ENCODE measurements at regions of chr2 and their contacts with region 1.

Region 1: GRCh38 chr2:238203094-238203972 is at the start of gene ILKAP:
- DNase-seq: peak; percentile 82
- H3K4me3 Mint-ChIP-seq: peak within 1 kb of the TSS; percentile 84
- H3K27ac Mint-ChIP-seq: peak within 1 kb of the TSS; percentile 89
- H3K4me1 Mint-ChIP-seq: peaks cover 29% of the 10 kb centered on the region
- H3K27me3 Mint-ChIP-seq: no peaks in the 10 kb centered on the region
- CTCF ChIP-seq: no peak
- total RNA-seq, gene ILKAP: 57.2 and 59.6 TPM in 2 replicates

Region 2: DNA sequence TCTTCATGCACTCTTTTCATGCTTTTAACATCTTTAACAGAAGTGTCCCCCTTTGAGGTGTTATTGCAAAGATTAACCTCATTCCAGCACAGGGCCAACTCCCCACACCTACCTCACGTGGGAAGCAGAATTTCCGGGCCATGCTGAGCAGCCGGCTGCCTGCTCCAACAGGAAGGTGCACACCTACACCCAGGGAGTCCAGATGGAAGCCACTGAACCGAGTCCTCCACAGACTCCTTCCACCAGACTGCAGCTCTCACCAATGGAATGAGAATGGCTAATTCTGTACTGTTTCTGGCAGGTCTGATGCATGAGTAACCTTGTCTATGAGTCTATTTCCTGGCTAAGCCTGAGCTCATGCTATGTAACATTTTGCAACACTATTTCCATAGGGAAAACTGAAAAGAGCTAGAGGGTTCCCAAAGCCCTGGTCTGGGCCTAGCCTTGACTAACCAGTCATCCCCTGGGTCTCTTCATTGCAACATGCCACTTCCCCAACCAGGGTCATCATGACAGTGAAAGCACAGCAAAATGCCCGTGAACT is 33.6 kb before region 1 on chr2:
- CTCF ChIA-PET with region 1: no interaction called
- POLR2A ChIA-PET with region 1: interaction called, 18 read pairs
- intact Hi-C with region 1: no loop called
- DNase-seq: peak; percentile 96
- H3K4me3 Mint-ChIP-seq: peak overlapping the region; percentile 41
- H3K27ac Mint-ChIP-seq: peak overlapping the region; percentile 94
- H3K4me1 Mint-ChIP-seq: peaks cover 25% of the 10 kb centered on the region
- H3K27me3 Mint-ChIP-seq: no peaks in the 10 kb centered on the region
- CTCF ChIP-seq: no peak

Region 3: DNA sequence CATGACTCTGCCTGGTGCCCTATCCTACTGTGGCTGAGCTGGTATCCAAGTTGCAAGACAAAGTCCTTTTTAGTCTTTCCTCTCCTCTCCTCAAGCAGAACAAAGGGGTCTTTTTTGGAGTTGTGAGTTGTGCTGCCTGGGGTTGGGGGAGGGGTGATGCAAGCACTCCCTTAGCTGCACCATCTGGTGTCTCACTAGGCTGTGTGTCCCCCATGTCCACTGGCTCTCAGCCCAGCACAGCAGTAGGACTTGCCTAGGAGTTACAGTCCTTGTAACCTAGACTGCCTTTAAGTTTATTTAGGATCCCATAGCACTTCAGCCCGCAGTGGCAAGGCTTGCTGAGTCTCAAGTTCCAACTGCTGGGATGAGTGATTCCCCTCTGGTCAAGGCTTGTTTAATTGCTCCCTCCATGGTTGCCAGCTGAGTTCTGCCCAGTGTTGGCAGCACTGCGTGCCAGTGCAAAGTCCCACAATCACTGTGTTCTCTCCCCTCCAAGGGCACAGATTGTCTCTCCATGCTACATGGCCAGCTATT is 13.4 kb after region 1 on chr2:
- CTCF ChIA-PET with region 1: no interaction called
- POLR2A ChIA-PET with region 1: interaction called, 12 read pairs
- intact Hi-C with region 1: no loop called
- DNase-seq: no peak
- H3K4me3 Mint-ChIP-seq: no peak overlapping the region
- H3K27ac Mint-ChIP-seq: no peak overlapping the region
- H3K4me1 Mint-ChIP-seq: no peaks in the 10 kb centered on the region
- H3K27me3 Mint-ChIP-seq: peaks cover 20% of the 10 kb centered on the region
- CTCF ChIP-seq: no peak

Region 4: GRCh38 chr2:238239872-238240751 is 36.8 kb after region 1 on chr2 and contains the start of gene HES6:
- CTCF ChIA-PET with region 1: no interaction called
- POLR2A ChIA-PET with region 1: interaction called, 13 read pairs
- intact Hi-C with region 1: no loop called
- DNase-seq: peak; percentile 86
- H3K4me3 Mint-ChIP-seq: peak within 1 kb of the TSS; percentile 80
- H3K27ac Mint-ChIP-seq: no peak within 1 kb of the TSS
- H3K4me1 Mint-ChIP-seq: peaks cover 5% of the 10 kb centered on the region
- H3K27me3 Mint-ChIP-seq: no peaks in the 10 kb centered on the region
- CTCF ChIP-seq: no peak
- total RNA-seq, gene HES6: 16.8 and 19.7 TPM in 2 replicates